Spleen (tissue), 13 donors: ENCODE measurements at regions of chr12 and their contacts with region 1.

Region 1: DNA sequence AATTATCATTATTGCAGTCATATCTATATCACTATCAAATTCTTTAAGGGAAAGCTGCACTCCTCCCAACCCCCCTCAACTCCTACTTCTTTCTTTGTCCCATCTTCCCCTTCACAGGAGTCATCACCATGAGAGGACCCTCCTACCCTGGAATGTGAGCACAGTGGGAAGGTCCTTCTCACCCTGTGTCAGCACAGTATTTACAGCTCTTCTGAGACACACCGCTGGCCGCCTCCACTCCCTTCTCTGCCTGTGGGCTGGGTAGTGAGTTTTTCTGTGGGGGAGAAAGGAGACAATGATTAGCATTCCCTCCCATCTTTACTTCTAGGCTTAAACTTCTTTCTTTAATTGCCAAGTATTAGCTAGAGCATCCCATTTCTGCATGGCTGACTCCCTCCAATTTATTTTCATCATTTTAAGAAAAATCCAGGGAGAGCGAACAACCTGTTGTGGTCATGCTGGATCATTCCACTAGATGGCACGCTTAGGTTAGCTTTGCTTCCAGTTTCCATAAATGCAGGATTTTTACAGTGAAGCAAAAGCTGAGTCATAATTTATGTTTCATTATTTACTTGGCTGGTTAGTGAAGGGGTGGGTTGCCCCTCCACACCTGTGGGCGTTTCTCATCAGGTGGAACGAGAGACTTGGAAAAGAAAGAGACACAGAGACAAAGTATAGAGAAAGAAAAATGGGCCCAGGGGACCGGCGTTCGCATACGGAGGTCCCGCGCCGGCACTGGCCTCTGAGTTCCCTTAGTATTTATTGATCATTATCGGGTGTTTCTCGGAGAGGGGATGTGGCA is 188.5 kb downstream of the ALX1 start:
- DNase-seq: no peak
- H3K4me3 ChIP-seq: peak overlapping the region in 7 of 8 donors; percentile 22 to 63 (median 32)
- H3K27ac ChIP-seq: no peak overlapping the region
- H3K4me1 ChIP-seq: peaks cover 0 to 15% (median 6%) of the 10 kb centered on the region in 6 donors
- H3K27me3 ChIP-seq: peaks cover 0 to 6% (median 0%) of the 10 kb centered on the region in 7 donors
- CTCF ChIP-seq: peak; percentile 25 to 72 (median 63)
- POLR2A ChIP-seq: no peak

Region 2: GRCh38 chr12:85626001-85626781 is 157.6 kb after region 1 on chr12:
- intact Hi-C with region 1: no loop called
- DNase-seq: no peak
- H3K4me3 ChIP-seq: no peak overlapping the region
- H3K27ac ChIP-seq: no peak overlapping the region
- H3K4me1 ChIP-seq: peaks cover 0 to 5% (median 0%) of the 10 kb centered on the region in 6 donors
- H3K27me3 ChIP-seq: no peaks in the 10 kb centered on the region
- CTCF ChIP-seq: no peak
- POLR2A ChIP-seq: no peak

Region 3: DNA sequence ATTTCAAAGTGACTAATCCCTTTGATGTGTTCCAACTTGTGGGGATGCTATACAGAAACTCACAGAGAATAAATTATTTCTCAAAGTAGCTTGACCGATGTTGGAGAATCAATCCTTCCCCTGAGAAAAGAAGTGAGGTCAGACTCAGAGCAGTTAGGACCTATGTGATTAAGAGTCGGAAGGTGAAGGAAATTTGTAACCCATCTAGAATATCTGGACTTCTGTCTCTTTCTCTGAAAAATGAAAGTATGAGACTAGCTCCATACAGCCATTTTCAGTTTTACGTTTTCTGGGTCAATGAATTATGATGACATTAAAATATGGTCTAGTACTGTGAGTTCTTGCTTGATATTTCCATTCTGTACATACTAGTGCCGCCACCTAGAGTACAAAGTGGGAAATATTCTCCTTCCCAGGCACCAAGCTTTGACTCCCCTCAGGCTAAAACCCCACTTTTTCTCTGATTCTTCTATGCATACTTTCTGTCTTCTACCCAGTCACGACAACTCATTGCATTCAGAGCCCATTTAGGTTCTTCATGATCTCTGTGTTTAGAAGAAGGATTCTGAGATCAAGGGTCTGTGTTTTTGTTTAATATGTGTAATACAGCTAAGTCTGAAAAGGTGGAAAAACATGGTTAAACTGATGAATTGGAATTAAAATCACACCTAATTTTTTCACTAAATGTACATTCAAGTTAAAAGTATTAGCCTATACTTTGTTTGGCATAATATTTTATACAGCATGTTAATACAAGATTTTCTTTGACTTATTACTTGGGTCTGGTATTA is 398.6 kb after region 1 on chr12:
- intact Hi-C with region 1: loop called (anchors 5 kb)
- DNase-seq: no peak
- H3K4me3 ChIP-seq: no peak overlapping the region
- H3K27ac ChIP-seq: no peak overlapping the region
- H3K4me1 ChIP-seq: no peaks in the 10 kb centered on the region
- H3K27me3 ChIP-seq: no peaks in the 10 kb centered on the region
- CTCF ChIP-seq: peak in 10 of 11 experiments; percentile 42 to 77 (median 60)
- POLR2A ChIP-seq: no peak

Region 4: GRCh38 chr12:85971800-85972199 is 503.2 kb after region 1 on chr12:
- intact Hi-C with region 1: no loop called
- DNase-seq: no peak
- H3K4me3 ChIP-seq: no peak overlapping the region
- H3K27ac ChIP-seq: no peak overlapping the region
- H3K4me1 ChIP-seq: no peaks in the 10 kb centered on the region
- H3K27me3 ChIP-seq: no peaks in the 10 kb centered on the region
- CTCF ChIP-seq: no peak
- POLR2A ChIP-seq: no peak